ENCODE measurements at regions of chr17 and their contacts with region 1.

Region 1: DNA sequence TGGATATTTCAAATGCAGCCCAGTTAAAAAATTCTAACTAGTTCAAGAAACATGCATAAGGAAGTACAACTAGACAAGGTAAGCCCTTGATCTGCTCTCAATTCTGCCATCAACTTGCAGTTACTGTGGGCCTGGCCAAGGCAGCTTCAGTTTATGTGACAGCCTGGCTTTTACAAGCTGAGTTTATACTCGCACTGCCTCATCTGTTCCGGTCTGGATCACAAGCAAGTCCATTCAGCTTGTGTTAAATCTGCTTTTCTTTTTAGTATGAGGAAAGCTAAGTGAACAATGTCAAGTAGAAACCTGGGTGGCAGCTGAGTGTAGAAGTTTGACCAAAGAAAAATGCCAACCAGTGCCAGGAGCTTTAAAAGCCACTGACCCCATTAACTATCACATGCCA is 76.6 kb upstream of the CORO6 start:
- DNase-seq: no peak
- H3K4me3 Mint-ChIP-seq: no peak overlapping the region
- H3K27ac Mint-ChIP-seq: no peak overlapping the region
- H3K4me1 Mint-ChIP-seq: no peaks in the 10 kb centered on the region
- H3K27me3 Mint-ChIP-seq: no peaks in the 10 kb centered on the region
- CTCF ChIP-seq: no peak

Region 2: GRCh38 chr17:29740017-29740416 is 40.7 kb after region 1 on chr17:
- CTCF ChIA-PET with region 1: no interaction called
- intact Hi-C with region 1: loop called (anchors 5 kb)
- DNase-seq: no peak
- H3K4me3 Mint-ChIP-seq: no peak overlapping the region
- H3K27ac Mint-ChIP-seq: no peak overlapping the region
- H3K4me1 Mint-ChIP-seq: peaks cover 10% of the 10 kb centered on the region
- H3K27me3 Mint-ChIP-seq: no peaks in the 10 kb centered on the region
- CTCF ChIP-seq: no peak

Measured in Calu3 (cell line).